ENCODE measurements at regions of chr5 and their contacts with region 1.

Region 1: GRCh38 chr5:178146020-178146820 is 7.5 kb downstream of the NHP2 start:
- DNase-seq: peak; percentile 66
- ATAC-seq: peak; percentile 92
- H3K4me3 ChIP-seq: no peak overlapping the region
- H3K27ac ChIP-seq: no peak overlapping the region
- H3K4me1 ChIP-seq: no peaks in the 10 kb centered on the region
- H3K27me3 ChIP-seq: no peaks in the 10 kb centered on the region
- CTCF ChIP-seq: peak; percentile 91
- EP300 ChIP-seq: no peak
- POLR2A ChIP-seq: peak in 1 of 2 experiments; percentile 40; a peak in 1 of 4 replicates
- RAD21 ChIP-seq: peak; percentile 64; the same call in 1 of the 2 replicates

Region 2: DNA sequence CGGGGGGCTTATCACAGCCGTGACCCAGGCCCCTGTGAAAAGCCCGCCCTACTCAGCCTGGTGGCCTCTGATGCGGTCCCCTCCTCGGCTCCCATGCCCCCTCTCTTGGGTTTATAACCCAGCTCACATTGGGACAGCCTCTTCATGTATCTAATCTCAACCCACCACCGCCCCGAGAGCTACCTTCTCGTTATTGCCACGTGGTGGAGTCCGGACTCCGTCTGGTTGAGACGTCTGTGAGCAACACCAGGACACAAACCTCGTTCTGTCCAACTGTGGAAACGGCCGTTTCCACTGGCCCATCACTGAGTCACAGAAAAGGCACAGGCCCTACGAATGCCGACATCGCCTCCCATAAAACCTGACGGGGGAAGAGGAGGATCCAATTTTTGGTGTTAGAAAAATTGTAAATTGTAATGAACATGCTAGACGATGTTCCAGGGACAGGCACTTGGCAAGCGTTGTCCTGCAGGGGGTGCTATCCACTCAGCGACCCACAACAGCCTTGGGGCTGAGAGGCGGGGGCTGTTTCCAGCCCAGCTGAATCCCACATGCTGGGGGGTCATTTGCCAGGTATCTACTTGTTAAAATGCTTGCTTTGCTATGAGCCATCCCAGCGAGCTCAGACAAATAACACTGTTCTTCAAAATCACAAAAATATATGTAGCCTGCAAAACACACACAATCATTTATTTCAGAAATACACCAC is 70.2 kb before region 1 on chr5:
- CTCF ChIA-PET with region 1: interaction called, 38 read pairs
- POLR2A ChIA-PET with region 1: no interaction called
- in situ Hi-C with region 1: loop called (anchors 5 kb)
- intact Hi-C with region 1: loop called (anchors 1 kb)
- DNase-seq: peak; percentile 27
- ATAC-seq: peak; percentile 85
- H3K4me3 ChIP-seq: no peak overlapping the region
- H3K27ac ChIP-seq: no peak overlapping the region
- H3K4me1 ChIP-seq: peaks cover 13% of the 10 kb centered on the region; the same call in 1 of the 2 replicates
- H3K27me3 ChIP-seq: peaks cover 1 to 31% of the 10 kb centered on the region in 2 experiments; a peak in 3 of 5 replicates
- CTCF ChIP-seq: peak; percentile 86
- EP300 ChIP-seq: no peak
- POLR2A ChIP-seq: no peak
- RAD21 ChIP-seq: peak; percentile 72

Region 3: GRCh38 chr5:178120868-178121357 is 25.3 kb before region 1 on chr5:
- CTCF ChIA-PET with region 1: interaction called, 8 read pairs
- POLR2A ChIA-PET with region 1: interaction called, 3 read pairs
- in situ Hi-C with region 1: no loop called
- intact Hi-C with region 1: loop called (anchors 1 kb)
- DNase-seq: peak; percentile 82
- ATAC-seq: peak; percentile 93
- H3K4me3 ChIP-seq: peak overlapping the region in 1 of 3 experiments; percentile 39; a peak in 1 of 6 replicates
- H3K27ac ChIP-seq: no peak overlapping the region
- H3K4me1 ChIP-seq: peaks cover 13% of the 10 kb centered on the region
- H3K27me3 ChIP-seq: peaks cover 8 to 56% of the 10 kb centered on the region in 2 experiments; a peak in 4 of 5 replicates
- CTCF ChIP-seq: peak; percentile 84
- EP300 ChIP-seq: no peak
- POLR2A ChIP-seq: no peak
- RAD21 ChIP-seq: peak; percentile 22; the same call in 1 of the 2 replicates